CD8-positive, alpha-beta T cell (primary cell): ENCODE measurements at regions of chrX and their contacts with region 1.

Region 1: GRCh38 chrX:155544881-155545280 is 67.9 kb downstream of the TMLHE start:
- DNase-seq: no peak
- ATAC-seq: no peak
- H3K4me3 ChIP-seq: no peak overlapping the region
- H3K4me3 Mint-ChIP-seq: no peak overlapping the region
- H3K27ac ChIP-seq: no peak overlapping the region
- H3K27ac Mint-ChIP-seq: no peak overlapping the region
- H3K4me1 ChIP-seq: no peaks in the 10 kb centered on the region
- H3K4me1 Mint-ChIP-seq: no peaks in the 10 kb centered on the region
- H3K27me3 ChIP-seq: no peaks in the 10 kb centered on the region
- H3K27me3 Mint-ChIP-seq: no peaks in the 10 kb centered on the region
- CTCF ChIP-seq: no peak

Region 2: GRCh38 chrX:155592981-155593380 is 48.1 kb after region 1 on chrX:
- CTCF ChIA-PET with region 1: no interaction called
- POLR2A ChIA-PET with region 1: no interaction called
- intact Hi-C with region 1: loop called in 1 of 2 experiments (anchors 5 kb)
- DNase-seq: no peak
- ATAC-seq: no peak
- H3K4me3 ChIP-seq: no peak overlapping the region
- H3K4me3 Mint-ChIP-seq: no peak overlapping the region
- H3K27ac ChIP-seq: no peak overlapping the region
- H3K27ac Mint-ChIP-seq: no peak overlapping the region
- H3K4me1 ChIP-seq: no peaks in the 10 kb centered on the region
- H3K4me1 Mint-ChIP-seq: no peaks in the 10 kb centered on the region
- H3K27me3 ChIP-seq: no peaks in the 10 kb centered on the region
- H3K27me3 Mint-ChIP-seq: no peaks in the 10 kb centered on the region
- CTCF ChIP-seq: no peak